Endothelial cell of umbilical vein (primary cell): ENCODE measurements at regions of chr7 and their contacts with region 1.

Region 1: GRCh38 chr7:21497072-21497471 is 45.8 kb upstream of the DNAH11 start:
- DNase-seq: no peak
- H3K4me3 ChIP-seq: no peak overlapping the region
- H3K27ac ChIP-seq: no peak overlapping the region
- H3K4me1 ChIP-seq: no peaks in the 10 kb centered on the region
- H3K27me3 ChIP-seq: no peaks in the 10 kb centered on the region
- CTCF ChIP-seq: peak in 1 of 2 donors; percentile 13
- POLR2A ChIP-seq: no peak

Region 2: DNA sequence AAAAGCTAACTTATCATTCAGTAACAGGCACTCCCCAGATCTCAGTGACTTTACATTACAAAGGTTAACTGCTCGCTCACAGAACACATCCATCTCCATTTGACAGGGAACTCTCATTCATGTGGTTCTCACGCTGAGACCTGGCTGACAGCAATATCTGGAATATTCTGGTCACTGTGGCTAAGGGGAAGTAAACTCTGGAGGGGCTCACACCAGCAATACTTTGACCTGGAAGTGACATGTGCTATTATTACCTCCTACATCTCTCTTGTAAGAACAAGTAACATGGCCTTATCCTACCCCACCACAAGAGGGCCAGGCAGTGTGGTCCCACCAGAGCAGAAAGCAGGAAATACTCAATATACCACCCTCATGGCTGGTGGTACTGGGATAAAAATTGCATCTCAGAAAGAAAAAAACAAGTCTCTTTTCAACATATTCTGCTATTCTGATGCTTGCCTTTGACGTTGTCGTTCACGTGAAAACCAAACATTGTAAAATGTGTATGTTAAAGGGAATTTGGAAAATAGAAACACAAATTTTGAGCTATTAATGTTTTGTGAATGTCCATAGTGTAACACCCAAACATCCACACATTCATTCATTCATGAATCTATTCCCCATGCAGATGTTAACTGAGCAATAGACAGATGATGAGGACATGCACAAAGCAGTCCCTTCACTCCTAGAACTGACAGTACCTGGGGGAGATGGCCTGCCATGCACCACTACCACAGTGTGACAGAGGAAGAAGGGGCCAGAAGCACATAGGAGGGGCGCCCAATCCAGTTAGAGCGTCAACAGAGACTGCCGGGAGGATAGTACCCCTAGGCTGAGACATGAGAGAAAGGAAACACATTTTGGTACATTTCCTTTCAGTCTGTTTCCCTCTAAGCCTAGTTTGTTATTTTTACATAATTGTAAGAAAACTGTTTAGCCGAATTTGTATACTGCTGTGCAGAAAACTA is 235.2 kb before region 1 on chr7:
- CTCF ChIA-PET with region 1: interaction called, 15 read pairs
- POLR2A ChIA-PET with region 1: no interaction called
- dilution Hi-C with region 1: no loop called
- intact Hi-C with region 1: no loop called
- DNase-seq: peak; percentile 67
- H3K4me3 ChIP-seq: no peak overlapping the region
- H3K27ac ChIP-seq: no peak overlapping the region
- H3K4me1 ChIP-seq: peaks cover 2% of the 10 kb centered on the region
- H3K27me3 ChIP-seq: no peaks in the 10 kb centered on the region
- CTCF ChIP-seq: peak; percentile 67 to 68
- POLR2A ChIP-seq: no peak

Region 3: DNA sequence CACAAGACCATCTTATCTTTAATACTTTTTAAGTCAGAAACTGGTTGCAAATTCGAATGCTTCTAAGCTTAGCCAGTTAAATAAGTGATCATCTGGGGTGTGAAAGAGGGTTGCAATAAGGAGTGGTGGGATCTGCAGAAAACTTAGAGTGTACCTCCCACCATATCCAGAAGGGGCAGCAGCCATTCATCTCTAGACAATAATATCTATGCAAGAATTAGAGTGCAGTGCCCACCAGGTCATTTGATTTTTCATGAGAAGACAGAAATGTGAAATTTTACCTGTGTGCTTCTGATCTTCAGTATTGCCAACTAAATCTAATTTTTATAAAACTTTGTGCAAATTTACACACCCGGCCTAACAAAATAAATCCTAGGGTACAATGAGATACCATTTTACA is 196.4 kb before region 1 on chr7:
- CTCF ChIA-PET with region 1: no interaction called
- POLR2A ChIA-PET with region 1: no interaction called
- dilution Hi-C with region 1: no loop called
- intact Hi-C with region 1: loop called (anchors 2 kb)
- DNase-seq: no peak
- H3K4me3 ChIP-seq: no peak overlapping the region
- H3K27ac ChIP-seq: no peak overlapping the region
- H3K4me1 ChIP-seq: peaks cover 10% of the 10 kb centered on the region
- H3K27me3 ChIP-seq: no peaks in the 10 kb centered on the region
- CTCF ChIP-seq: peak; percentile 11 to 41
- POLR2A ChIP-seq: no peak

Region 4: DNA sequence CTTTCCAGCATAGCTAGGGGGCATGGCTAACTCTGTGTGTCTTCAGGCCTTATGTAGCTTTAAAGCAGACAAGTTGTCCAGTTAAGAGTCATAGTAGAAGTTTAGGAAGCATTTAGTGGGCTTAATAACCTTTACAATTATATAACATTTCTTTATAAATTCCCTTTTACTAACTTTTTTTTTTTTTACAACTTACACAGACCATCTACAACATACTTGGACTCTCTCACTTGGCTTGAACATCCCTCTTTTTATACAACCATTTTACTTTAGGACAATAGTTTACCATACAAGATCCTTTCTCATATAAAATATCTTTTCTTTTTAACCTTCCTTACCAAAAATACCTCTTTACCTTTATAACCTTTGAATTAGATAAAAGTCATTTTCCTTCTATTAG is 42.9 kb before region 1 on chr7:
- CTCF ChIA-PET with region 1: no interaction called
- POLR2A ChIA-PET with region 1: no interaction called
- dilution Hi-C with region 1: no loop called
- intact Hi-C with region 1: no loop called
- DNase-seq: no peak
- H3K4me3 ChIP-seq: no peak overlapping the region
- H3K27ac ChIP-seq: no peak overlapping the region
- H3K4me1 ChIP-seq: no peaks in the 10 kb centered on the region
- H3K27me3 ChIP-seq: no peaks in the 10 kb centered on the region
- CTCF ChIP-seq: no peak
- POLR2A ChIP-seq: no peak

Region 5: DNA sequence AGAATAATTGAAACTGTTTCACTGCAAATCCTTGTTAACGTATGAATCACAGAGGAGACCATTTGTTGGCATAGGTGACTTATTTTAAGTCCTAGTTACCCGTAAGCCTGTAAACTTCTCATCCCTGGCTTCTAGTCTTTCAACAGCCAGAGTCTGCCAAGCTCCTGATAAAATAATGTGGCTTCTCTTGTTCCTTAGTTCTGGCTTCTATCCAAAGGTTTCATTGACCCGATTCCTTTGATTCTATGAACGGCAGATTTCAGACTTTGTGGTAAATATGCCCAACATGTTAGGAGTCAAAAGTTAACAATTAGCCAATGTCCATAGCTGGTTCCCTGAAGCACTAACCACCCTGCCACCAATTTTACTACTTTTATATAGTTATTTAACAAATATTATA is 69.0 kb after region 1 on chr7:
- CTCF ChIA-PET with region 1: no interaction called
- POLR2A ChIA-PET with region 1: no interaction called
- dilution Hi-C with region 1: no loop called
- intact Hi-C with region 1: no loop called
- DNase-seq: no peak
- H3K4me3 ChIP-seq: no peak overlapping the region
- H3K27ac ChIP-seq: no peak overlapping the region
- H3K4me1 ChIP-seq: no peaks in the 10 kb centered on the region
- H3K27me3 ChIP-seq: peaks cover 7% of the 10 kb centered on the region in 2 experiments
- CTCF ChIP-seq: no peak
- POLR2A ChIP-seq: no peak

Region 6: DNA sequence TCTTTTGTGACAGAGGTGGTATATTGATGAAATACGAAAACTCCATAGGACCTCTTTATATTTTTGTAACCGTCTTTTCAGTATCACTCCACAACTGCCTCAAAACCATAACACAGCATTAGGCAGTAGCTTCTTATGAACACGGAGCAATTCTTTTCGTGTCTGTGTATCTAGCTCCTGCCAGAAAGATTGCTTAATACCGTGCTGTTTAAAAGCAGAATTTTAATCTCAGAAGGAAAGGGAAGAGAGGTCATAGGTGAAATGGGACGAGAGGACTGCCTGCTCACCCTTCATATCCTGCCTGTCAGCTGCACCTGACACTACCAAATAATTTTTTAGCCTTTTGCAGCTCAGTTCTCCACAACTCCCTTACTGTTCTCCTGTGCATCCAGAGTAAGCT is 246.4 kb after region 1 on chr7:
- CTCF ChIA-PET with region 1: no interaction called
- POLR2A ChIA-PET with region 1: no interaction called
- dilution Hi-C with region 1: no loop called
- intact Hi-C with region 1: no loop called
- DNase-seq: no peak
- H3K4me3 ChIP-seq: no peak overlapping the region
- H3K27ac ChIP-seq: no peak overlapping the region
- H3K4me1 ChIP-seq: no peaks in the 10 kb centered on the region
- H3K27me3 ChIP-seq: no peaks in the 10 kb centered on the region
- CTCF ChIP-seq: no peak
- POLR2A ChIP-seq: no peak

Region 7: DNA sequence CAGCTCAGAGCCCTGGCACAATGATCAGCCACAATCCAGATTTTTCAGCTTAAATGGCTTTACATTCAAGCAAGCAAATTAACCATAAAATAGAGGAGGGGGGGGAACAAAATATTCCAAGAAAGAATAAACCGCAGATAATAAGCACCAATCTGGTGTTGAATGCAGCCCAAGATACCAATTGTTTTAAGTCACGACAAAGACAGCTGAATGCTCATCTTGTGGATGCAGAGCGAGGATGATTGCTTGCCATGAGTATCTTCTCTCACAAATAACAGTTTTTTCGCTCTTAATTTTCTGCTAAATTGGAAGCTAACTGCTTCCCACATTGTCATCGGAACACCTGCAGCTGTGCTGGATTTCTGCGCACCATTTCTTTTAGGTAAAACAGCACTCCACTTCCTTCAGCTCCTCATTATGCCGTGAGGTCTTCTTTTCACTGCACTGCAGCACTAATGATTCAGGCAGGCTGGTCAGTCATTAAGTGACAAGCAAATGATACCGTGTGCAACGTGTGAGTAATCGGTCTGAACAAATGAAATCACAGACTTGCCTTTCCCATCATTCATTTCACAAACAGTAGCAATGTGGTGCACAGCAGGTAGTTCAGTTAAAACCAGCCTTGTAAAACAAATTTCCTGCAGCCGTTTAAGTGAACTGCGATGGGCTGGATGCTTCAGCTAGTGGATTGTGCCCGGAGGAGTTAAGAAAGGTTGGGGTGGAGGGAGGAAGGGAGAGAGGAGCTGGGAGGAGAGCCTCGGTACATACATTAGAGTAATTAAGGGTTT is 555.0 kb after region 1 on chr7:
- CTCF ChIA-PET with region 1: no interaction called
- POLR2A ChIA-PET with region 1: no interaction called
- dilution Hi-C with region 1: no loop called
- intact Hi-C with region 1: no loop called
- DNase-seq: peak; percentile 1
- H3K4me3 ChIP-seq: no peak overlapping the region
- H3K27ac ChIP-seq: no peak overlapping the region
- H3K4me1 ChIP-seq: no peaks in the 10 kb centered on the region
- H3K27me3 ChIP-seq: peaks cover 2 to 9% of the 10 kb centered on the region in 2 experiments
- CTCF ChIP-seq: no peak
- POLR2A ChIP-seq: no peak